ENCODE measurements at regions of chr17 and their contacts with region 1.

Region 1: GRCh38 chr17:77140166-77140878 is 447 bp upstream of the SEC14L1 start:
- DNase-seq: peak; percentile 100
- ATAC-seq: peak; percentile 87
- H3K4me3 ChIP-seq: peak overlapping the region; percentile 36 to 62 (median 51)
- H3K4me3 Mint-ChIP-seq: peak overlapping the region; percentile 63
- H3K27ac ChIP-seq: peak overlapping the region; percentile 80 to 85
- H3K27ac Mint-ChIP-seq: peak overlapping the region; percentile 97
- H3K4me1 ChIP-seq: peaks cover 38 to 58% of the 10 kb centered on the region in 2 donors
- H3K4me1 Mint-ChIP-seq: peaks cover 51% of the 10 kb centered on the region
- H3K27me3 ChIP-seq: no peaks in the 10 kb centered on the region
- H3K27me3 Mint-ChIP-seq: no peaks in the 10 kb centered on the region
- CTCF ChIP-seq: no peak

Region 2: DNA sequence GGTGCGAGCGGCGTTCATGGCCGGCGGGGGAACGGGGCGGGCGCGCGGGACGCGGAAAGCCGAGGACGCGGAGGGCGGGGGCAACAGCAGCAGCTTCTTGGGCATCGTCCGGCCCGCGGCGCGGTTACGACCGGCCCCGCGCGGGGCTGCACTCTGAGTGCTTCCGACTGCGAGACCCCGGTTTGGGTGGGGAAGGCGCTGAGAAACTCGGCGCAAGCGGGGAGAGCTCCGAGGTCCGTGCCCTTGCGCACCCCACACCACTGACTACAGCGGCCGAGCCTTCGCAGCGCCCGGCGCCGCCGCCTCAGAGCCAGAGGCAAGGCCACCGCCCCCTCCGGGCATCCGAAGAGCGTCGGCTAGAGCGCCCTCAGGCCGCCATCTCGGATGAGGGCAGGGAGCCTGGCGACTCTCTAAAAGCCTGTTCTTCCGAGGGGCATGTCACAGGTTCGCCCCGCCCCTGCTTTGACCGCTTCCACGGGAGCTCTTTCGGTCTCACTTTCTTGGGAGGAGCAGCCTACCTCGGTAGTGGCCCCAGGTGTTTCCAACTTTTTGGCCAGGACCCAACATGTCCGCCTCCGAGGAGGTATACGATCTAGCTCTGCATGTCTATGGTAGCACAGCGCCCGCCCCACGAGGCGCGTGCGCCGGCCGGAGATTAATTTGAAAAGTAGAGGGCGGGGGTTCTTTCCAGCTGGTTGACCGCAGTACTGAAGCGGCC is 786.6 kb before region 1 on chr17 and contains the start of gene PRPSAP1:
- CTCF ChIA-PET with region 1: no interaction called
- POLR2A ChIA-PET with region 1: no interaction called
- intact Hi-C with region 1: loop called (anchors 5 kb)
- DNase-seq: peak; percentile 96
- ATAC-seq: peak; percentile 93
- H3K4me3 ChIP-seq: peak within 1 kb of the TSS; percentile 53 to 88 (median 68)
- H3K4me3 Mint-ChIP-seq: peak within 1 kb of the TSS; percentile 99
- H3K27ac ChIP-seq: peak within 1 kb of the TSS; percentile 84 to 94
- H3K27ac Mint-ChIP-seq: peak within 1 kb of the TSS; percentile 99
- H3K4me1 ChIP-seq: peaks cover 7 to 16% of the 10 kb centered on the region in 2 donors
- H3K4me1 Mint-ChIP-seq: peaks cover 27% of the 10 kb centered on the region
- H3K27me3 ChIP-seq: no peaks in the 10 kb centered on the region
- H3K27me3 Mint-ChIP-seq: no peaks in the 10 kb centered on the region
- CTCF ChIP-seq: peak; percentile 19
- total RNA-seq, gene PRPSAP1: 45.5 and 48.0 TPM in 2 replicates

Region 3: DNA sequence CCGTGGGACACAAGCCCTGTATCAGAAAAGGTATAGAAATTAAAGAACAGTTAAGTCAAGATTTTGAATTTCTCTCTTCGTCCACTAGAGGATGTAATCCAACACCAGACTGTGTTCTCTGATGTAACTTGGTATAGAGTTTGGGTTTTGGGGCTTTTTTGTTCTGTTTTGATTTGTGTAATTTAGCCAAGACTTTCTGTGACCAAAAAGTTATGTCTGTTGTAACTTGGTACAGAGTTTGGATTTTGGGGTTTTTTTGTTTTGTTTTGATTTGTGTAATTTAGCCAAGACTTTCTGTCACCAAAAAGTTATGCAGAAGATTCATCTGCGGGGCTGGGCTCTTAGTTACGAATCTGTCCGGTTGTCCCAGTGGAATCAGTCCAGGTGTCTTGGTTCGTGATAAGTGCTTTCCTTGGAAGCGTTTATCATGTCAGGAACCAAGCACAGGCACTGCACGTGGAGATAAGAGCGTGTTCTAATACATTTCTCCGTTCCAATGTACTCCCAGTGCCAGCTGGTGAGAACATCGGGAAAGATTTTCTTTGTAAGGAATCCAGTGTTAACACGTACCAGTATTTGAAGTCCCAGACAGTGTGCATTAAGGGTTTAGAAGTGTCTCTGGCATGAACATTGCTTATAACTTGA is 43.6 kb before region 1 on chr17:
- CTCF ChIA-PET with region 1: interaction called, 4 read pairs
- POLR2A ChIA-PET with region 1: interaction called, 5 read pairs
- intact Hi-C with region 1: loop called (anchors 2 kb)
- DNase-seq: peak; percentile 53
- ATAC-seq: peak; percentile 58
- H3K4me3 ChIP-seq: no peak overlapping the region
- H3K4me3 Mint-ChIP-seq: no peak overlapping the region
- H3K27ac ChIP-seq: no peak overlapping the region
- H3K27ac Mint-ChIP-seq: peak overlapping the region; percentile 24
- H3K4me1 ChIP-seq: peaks cover 0 to 3% of the 10 kb centered on the region in 2 donors
- H3K4me1 Mint-ChIP-seq: peaks cover 26% of the 10 kb centered on the region
- H3K27me3 ChIP-seq: no peaks in the 10 kb centered on the region
- H3K27me3 Mint-ChIP-seq: no peaks in the 10 kb centered on the region
- CTCF ChIP-seq: peak; percentile 82

Region 4: DNA sequence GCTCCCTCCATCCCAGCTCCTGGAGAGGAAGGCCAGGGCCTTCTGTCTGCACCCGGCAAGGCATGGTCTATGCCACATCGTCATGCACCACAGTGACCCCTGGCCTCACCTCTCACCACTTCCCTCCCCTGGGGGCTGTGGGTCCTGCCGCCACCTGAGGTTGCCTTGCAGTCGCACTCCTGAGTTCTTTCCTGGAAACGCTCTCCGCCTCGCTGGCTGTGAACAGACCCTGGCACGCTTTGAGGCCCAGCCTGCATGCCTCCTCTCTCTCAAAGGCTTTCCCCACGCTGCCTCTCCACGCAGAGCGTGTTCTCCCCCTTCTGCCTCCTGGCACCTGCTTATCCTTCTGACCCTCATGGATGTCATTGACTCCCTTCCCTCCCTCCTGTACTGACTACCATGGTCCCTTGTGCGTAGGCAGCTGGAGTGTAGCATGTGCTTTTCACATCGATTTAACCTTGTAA is 45.9 kb after region 1 on chr17:
- CTCF ChIA-PET with region 1: no interaction called
- POLR2A ChIA-PET with region 1: no interaction called
- intact Hi-C with region 1: loop called (anchors 5 kb)
- DNase-seq: peak; percentile 35
- ATAC-seq: peak; percentile 54
- H3K4me3 ChIP-seq: no peak overlapping the region
- H3K4me3 Mint-ChIP-seq: no peak overlapping the region
- H3K27ac ChIP-seq: no peak overlapping the region
- H3K27ac Mint-ChIP-seq: no peak overlapping the region
- H3K4me1 ChIP-seq: peaks cover 53 to 69% of the 10 kb centered on the region in 2 donors
- H3K4me1 Mint-ChIP-seq: peaks cover 56% of the 10 kb centered on the region
- H3K27me3 ChIP-seq: no peaks in the 10 kb centered on the region
- H3K27me3 Mint-ChIP-seq: no peaks in the 10 kb centered on the region
- CTCF ChIP-seq: no peak

Region 5: GRCh38 chr17:77266891-77267341 is 126.6 kb after region 1 on chr17:
- CTCF ChIA-PET with region 1: no interaction called
- POLR2A ChIA-PET with region 1: interaction called, 10 read pairs
- intact Hi-C with region 1: no loop called
- DNase-seq: peak; percentile 24
- ATAC-seq: no peak
- H3K4me3 ChIP-seq: no peak overlapping the region
- H3K4me3 Mint-ChIP-seq: no peak overlapping the region
- H3K27ac ChIP-seq: no peak overlapping the region
- H3K27ac Mint-ChIP-seq: no peak overlapping the region
- H3K4me1 ChIP-seq: no peaks in the 10 kb centered on the region
- H3K4me1 Mint-ChIP-seq: no peaks in the 10 kb centered on the region
- H3K27me3 ChIP-seq: no peaks in the 10 kb centered on the region
- H3K27me3 Mint-ChIP-seq: peaks cover 18% of the 10 kb centered on the region
- CTCF ChIP-seq: peak; percentile 33

Region 6: GRCh38 chr17:77444984-77445759 is 304.9 kb after region 1 on chr17:
- CTCF ChIA-PET with region 1: no interaction called
- POLR2A ChIA-PET with region 1: interaction called, 4 read pairs
- intact Hi-C with region 1: loop called (anchors 10 kb)
- DNase-seq: peak; percentile 95
- ATAC-seq: peak; percentile 50
- H3K4me3 ChIP-seq: peak overlapping the region in 4 of 5 experiments; percentile 32 to 54 (median 49)
- H3K4me3 Mint-ChIP-seq: peak overlapping the region; percentile 79
- H3K27ac ChIP-seq: peak overlapping the region; percentile 96 to 100
- H3K27ac Mint-ChIP-seq: peak overlapping the region; percentile 98
- H3K4me1 ChIP-seq: peaks cover 89 to 100% of the 10 kb centered on the region in 2 donors
- H3K4me1 Mint-ChIP-seq: peaks cover 87% of the 10 kb centered on the region
- H3K27me3 ChIP-seq: no peaks in the 10 kb centered on the region
- H3K27me3 Mint-ChIP-seq: no peaks in the 10 kb centered on the region
- CTCF ChIP-seq: no peak

Measured in B cell (primary cell).